ENCODE measurements at regions of chr2 and their contacts with region 1.

Region 1: DNA sequence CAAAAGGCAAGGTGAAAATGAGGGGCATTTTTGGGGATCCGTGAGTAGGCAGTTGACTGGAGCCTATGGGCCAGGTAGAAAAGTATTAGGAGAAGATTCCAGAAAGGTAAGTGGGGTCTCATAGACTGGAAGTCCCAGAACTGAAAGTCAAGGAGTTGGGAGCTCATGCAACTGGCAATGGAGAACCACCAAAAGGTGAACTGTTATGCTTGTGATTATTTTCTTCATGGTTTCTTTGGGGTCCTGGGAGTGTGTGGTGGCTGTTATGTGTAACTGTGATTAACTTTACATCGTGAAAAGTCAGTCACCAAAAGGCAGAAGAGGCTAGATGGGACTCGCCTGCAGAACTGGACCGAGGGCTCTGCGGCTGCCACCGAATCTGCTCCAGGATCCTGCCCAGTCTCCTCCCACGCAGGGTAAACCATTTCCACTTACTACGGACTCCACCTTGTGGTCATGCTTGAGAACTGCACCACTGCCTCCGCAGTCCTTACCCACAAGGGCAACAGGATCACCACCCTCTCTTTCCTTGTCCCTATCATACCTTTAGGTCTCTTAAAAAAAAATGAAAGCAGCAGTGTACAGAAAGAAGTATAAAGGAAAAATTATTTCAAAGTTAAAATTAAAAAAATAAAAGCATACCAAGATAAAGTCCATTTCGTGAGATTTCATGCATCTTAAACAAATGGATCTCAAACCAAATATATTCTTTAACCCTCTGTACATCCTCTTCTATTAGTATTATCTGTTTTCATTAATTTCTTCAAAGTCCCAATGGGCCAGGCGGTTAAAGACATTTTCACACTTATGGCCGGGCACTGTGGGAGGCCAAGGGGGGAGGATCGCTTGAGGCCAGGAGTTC is 15.6 kb upstream of the CEP68 start:
- DNase-seq: peak; percentile 92

Region 2: DNA sequence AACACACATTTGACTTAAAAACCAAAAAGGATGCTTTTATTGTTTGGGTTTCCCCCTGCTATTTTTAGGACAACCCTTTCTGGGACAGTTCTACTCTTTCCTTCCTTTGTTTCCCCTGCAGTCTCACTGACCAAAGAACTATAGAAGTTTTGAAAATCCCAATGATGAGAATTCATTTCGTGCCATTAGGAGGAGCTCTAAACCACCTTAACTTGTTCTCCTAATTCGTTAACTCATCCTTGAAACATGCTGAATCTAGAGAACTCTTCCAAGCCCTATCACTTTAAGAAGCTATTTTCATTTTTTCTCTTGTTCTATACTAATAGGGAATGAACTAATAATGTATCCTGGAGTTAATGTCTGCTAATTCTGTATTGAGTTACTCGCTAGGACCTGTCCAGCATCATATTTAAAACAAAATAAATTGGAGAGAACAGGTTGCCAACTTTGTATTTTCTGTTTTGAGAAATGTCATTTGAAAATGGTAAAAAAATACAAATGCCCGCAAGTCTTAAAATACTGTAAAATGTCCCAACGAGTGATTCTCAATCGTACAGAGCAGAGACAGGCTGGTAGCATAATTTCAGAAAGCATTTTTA is 453.6 kb before region 1 on chr2:
- intact Hi-C with region 1: loop called (anchors 10 kb)
- DNase-seq: no peak

Region 3: GRCh38 chr2:64914735-64915509 is 125.7 kb before region 1 on chr2:
- intact Hi-C with region 1: loop called (anchors 1 kb)
- DNase-seq: peak; percentile 54

Region 4: DNA sequence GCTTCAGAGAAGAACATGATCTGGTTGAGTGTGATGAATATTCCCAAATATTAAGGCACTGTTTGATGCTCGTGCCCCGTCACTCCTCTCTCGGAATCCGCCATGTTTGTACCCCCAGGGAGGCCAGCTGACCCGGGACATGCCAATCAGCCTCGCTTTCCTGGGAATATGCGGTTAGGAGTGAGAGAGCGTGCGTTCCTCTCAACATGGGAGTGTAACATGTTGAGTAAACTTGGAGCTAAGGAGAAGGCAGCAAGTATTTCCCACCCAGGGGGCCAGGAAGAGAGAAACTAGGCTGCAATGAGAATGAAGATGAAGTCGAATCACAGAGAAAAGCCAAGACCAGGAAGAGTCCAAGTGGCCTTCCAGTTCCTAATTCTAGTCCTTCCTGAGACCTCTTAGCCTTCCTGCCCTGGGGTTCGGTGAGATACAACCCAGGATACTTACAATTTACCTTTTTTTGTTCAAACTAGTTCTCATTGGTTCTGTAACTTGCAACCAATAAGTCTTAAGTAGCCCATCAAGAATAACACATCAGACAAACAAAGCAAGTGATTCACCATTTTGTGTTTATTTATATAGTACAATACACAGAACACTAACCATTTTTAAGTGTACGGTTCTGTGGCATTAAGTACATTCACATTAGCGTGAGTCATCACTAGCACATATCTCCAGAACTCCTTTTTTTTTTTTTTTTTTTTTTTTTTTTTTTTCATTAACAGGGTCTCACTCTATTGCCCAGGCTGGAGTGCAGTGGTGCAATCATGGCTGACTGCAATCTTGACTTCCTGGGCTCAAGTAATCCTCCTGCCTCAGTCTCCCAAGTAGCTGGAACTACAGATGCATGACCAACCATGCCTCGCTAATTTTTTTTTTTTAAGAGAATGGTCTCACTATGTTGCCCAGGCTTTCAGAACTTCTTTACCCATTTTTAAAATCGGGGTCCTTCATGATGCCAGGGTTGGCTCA is 87.8 kb before region 1 on chr2:
- intact Hi-C with region 1: no loop called
- DNase-seq: no peak

Region 5: DNA sequence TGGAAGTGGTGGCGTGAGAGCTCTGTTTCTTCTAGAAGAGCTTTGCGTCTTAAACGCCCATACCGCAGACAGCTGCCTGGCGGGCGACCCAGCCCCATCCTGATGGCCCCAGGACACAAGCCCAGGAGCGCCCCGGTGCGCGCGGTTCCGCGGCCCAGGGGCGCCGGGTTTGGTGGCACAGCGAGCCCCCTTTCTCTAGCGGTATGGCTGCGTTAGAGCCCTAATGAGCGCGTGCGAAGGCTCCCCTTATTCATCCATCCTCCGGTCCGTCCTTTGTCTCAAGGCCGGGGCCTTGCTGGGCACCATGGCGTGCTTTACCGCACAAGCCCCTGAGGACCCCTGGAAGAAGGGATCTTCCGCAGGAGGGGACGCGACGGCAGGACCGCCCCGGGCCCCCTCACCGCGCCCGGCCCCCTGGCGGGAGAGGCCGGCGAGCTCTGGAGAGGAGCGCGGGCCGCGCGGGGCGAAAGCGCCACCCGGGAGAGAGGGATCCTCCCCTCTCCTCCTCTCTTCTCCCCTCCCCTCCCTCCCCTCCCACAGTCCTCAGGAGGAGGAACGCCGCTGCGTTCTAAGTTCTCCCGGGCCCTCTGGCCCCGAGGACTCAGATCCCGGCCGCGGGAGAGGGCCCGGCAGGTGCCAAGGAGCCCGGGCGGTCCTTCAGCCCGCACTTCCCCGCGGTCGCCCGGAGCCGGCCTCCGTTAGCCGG is 52.1 kb before region 1 on chr2:
- intact Hi-C with region 1: loop called (anchors 5 kb)
- DNase-seq: peak; percentile 89